A673 (cell line): ENCODE measurements at regions of chr11 and their contacts with region 1.

Region 1: GRCh38 chr11:2428322-2428795 is 16.0 kb downstream of the TRPM5 start:
- DNase-seq: peak; percentile 34
- H3K4me3 ChIP-seq: no peak overlapping the region
- H3K27ac ChIP-seq: no peak overlapping the region
- H3K4me1 ChIP-seq: no peaks in the 10 kb centered on the region
- H3K27me3 ChIP-seq: no peaks in the 10 kb centered on the region
- CTCF ChIP-seq: peak; percentile 71

Region 2: GRCh38 chr11:2612884-2613571 is 184.7 kb after region 1 on chr11:
- CTCF ChIA-PET with region 1: no interaction called
- POLR2A ChIA-PET with region 1: no interaction called
- intact Hi-C with region 1: no loop called
- DNase-seq: no peak
- H3K4me3 ChIP-seq: no peak overlapping the region
- H3K27ac ChIP-seq: no peak overlapping the region
- H3K4me1 ChIP-seq: no peaks in the 10 kb centered on the region
- H3K27me3 ChIP-seq: no peaks in the 10 kb centered on the region
- CTCF ChIP-seq: no peak

Region 3: GRCh38 chr11:2892215-2893020 is 464.1 kb after region 1 on chr11:
- CTCF ChIA-PET with region 1: no interaction called
- POLR2A ChIA-PET with region 1: no interaction called
- intact Hi-C with region 1: loop called (anchors 5 kb)
- DNase-seq: peak; percentile 71
- H3K4me3 ChIP-seq: peak overlapping the region; percentile 32
- H3K27ac ChIP-seq: peak overlapping the region; percentile 55
- H3K4me1 ChIP-seq: peaks cover 19% of the 10 kb centered on the region
- H3K27me3 ChIP-seq: no peaks in the 10 kb centered on the region
- CTCF ChIP-seq: peak; percentile 92